ENCODE measurements at regions of chr5 and their contacts with region 1.

Region 1: GRCh38 chr5:168268949-168269943 is 22.2 kb upstream of the WWC1 start:
- DNase-seq: peak; percentile 91
- H3K4me3 ChIP-seq: peak overlapping the region; percentile 43 to 65
- H3K27ac ChIP-seq: peak overlapping the region; percentile 36 to 48
- H3K4me1 ChIP-seq: peaks cover 8 to 28% of the 10 kb centered on the region in 2 experiments; a peak in 3 of 4 replicates
- H3K27me3 ChIP-seq: no peaks in the 10 kb centered on the region
- CTCF ChIP-seq: peak; percentile 92
- EP300 ChIP-seq: no peak
- RAD21 ChIP-seq: peak; percentile 96

Region 2: DNA sequence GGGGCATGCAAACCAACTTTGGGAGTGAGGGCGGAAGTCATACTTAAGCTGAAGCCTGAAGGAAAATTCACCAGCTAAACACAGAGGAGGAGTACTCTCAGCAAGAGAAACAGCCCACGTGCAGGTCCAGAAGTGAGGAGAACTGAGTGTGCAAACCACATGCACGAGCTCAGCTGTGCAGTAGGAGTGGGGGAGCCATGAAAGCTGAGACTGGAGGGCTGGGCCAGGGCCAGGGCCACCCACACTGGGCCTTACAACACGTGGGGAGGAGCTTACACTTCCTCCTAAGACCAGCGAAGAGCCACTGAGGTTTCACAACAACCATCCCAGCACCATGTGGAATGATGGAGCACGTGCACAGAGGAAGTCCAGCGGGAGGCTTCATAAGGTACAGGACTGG is 12.9 kb after region 1 on chr5:
- CTCF ChIA-PET with region 1: interaction called, 18 read pairs
- POLR2A ChIA-PET with region 1: no interaction called
- DNase-seq: no peak
- H3K4me3 ChIP-seq: no peak overlapping the region
- H3K27ac ChIP-seq: no peak overlapping the region
- H3K4me1 ChIP-seq: no peaks in the 10 kb centered on the region
- H3K27me3 ChIP-seq: no peaks in the 10 kb centered on the region
- CTCF ChIP-seq: no peak
- EP300 ChIP-seq: no peak
- RAD21 ChIP-seq: no peak

Region 3: DNA sequence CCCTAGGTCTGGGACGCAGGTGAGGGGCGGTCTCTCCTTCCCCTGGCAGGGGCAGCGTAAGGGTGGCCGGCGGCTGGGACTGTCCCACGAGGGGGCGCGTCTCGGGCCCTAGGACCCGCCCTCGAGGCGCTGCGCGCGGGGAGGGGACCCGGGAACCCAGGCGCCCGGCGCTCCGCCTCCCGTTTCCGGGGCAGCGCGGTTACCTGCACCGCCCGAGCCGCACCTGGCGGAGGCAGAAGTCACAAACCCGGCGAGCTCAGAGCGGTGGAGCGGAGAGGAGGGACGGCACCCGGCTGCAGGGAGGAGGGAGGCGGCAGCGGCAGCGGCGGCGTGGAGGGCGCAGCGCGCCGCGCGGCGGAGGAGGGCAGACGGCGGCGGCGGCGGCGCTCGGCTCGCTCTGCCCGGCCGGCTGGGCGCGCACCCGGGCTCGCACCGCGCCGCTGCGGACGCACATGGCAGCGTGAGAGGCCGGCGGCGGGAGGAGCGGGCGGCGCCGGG is 22.3 kb after region 1 on chr5 and contains the start of gene WWC1:
- CTCF ChIA-PET with region 1: interaction called, 20 read pairs
- POLR2A ChIA-PET with region 1: no interaction called
- DNase-seq: peak; percentile 92
- H3K4me3 ChIP-seq: peak within 1 kb of the TSS; percentile 72 to 73
- H3K27ac ChIP-seq: peak within 1 kb of the TSS in 1 of 2 experiments; percentile 55; a peak in 1 of 4 replicates
- H3K4me1 ChIP-seq: peaks cover 11 to 12% of the 10 kb centered on the region in 2 experiments
- H3K27me3 ChIP-seq: no peaks in the 10 kb centered on the region
- CTCF ChIP-seq: peak; percentile 54
- EP300 ChIP-seq: no peak; a peak in 1 of 4 replicates
- RAD21 ChIP-seq: no peak
- polyA plus RNA-seq, gene WWC1: 15.2 and 16.9 TPM in 2 replicates

Region 4: DNA sequence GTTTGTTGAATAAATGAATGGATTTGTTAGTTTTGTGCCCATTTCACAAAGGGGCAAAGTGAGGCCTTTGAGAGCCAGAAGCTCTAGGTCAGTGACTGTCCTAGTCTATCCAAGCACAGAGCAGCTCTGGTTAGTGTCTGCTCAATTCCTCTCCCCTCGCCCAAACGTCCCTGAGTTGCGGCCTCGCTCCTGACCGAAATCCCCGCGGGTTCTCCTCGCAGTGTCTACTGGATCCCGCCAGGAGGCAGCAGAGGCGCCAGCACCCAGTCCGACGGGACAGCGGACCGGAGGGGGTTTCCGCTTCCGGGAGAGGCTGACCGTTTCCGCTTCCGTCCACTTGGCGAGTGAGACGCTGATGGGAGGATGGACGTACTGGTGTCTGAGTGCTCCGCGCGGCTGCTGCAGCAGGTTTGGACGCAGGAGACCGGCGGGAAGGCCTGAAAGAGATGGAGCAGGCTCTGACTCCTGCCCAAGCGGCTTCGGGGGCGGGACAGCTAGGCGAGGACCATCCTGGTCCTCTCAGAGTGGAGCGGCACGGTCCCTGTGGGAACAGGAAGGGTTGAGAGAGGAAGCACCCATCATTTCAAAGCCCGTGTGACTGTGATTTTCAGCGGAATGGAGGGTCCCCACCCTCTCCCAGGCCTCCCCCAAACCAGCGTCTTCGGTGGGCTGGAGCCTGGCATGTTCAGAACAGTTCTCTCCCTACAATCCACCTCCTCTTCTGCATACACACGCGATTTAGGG is 217.1 kb after region 1 on chr5 and contains the start of gene RARS1:
- CTCF ChIA-PET with region 1: interaction called, 27 read pairs
- POLR2A ChIA-PET with region 1: no interaction called
- DNase-seq: peak; percentile 95
- H3K4me3 ChIP-seq: peak within 1 kb of the TSS; percentile 86 to 98
- H3K27ac ChIP-seq: peak within 1 kb of the TSS; percentile 83 to 90
- H3K4me1 ChIP-seq: peaks cover 0 to 7% of the 10 kb centered on the region in 2 experiments; a peak in 2 of 4 replicates
- H3K27me3 ChIP-seq: no peaks in the 10 kb centered on the region
- CTCF ChIP-seq: peak; percentile 90
- EP300 ChIP-seq: no peak
- RAD21 ChIP-seq: peak; percentile 72
- polyA plus RNA-seq, gene RARS1: 53.5 and 66.2 TPM in 2 replicates

Region 5: DNA sequence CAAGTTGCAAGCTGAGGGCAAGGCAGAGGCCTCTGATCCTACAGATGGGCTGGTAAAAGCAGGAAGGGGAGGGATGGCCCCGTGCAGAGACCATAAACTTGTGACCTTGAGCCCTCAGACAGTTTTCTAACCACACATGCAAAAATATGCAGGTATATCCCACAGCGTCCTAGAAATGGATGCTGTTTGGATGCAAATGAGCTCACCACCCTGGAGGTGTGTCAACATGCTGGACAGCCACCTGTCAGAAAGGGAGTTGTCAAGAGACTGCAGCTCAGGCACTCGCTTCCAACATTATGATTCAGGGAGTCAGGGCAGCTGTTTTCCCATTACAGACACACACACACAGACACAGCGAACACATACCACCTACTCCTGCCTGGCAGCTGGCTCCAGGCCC is 407.3 kb after region 1 on chr5:
- CTCF ChIA-PET with region 1: no interaction called
- POLR2A ChIA-PET with region 1: no interaction called
- DNase-seq: no peak
- H3K4me3 ChIP-seq: no peak overlapping the region
- H3K27ac ChIP-seq: peak overlapping the region in 1 of 2 experiments; percentile 35; a peak in 1 of 4 replicates
- H3K4me1 ChIP-seq: peaks cover 0 to 14% of the 10 kb centered on the region in 2 experiments; a peak in 1 of 4 replicates
- H3K27me3 ChIP-seq: no peaks in the 10 kb centered on the region
- CTCF ChIP-seq: no peak
- EP300 ChIP-seq: no peak
- RAD21 ChIP-seq: no peak